A673 (cell line): ENCODE measurements at regions of chr3 and their contacts with region 1.

Region 1: GRCh38 chr3:43998836-43999727 is 242.6 kb upstream of the TOPAZ1 start:
- DNase-seq: peak; percentile 80
- H3K4me3 ChIP-seq: peak overlapping the region; percentile 63
- H3K27ac ChIP-seq: no peak overlapping the region
- H3K4me1 ChIP-seq: no peaks in the 10 kb centered on the region
- H3K27me3 ChIP-seq: peaks cover 5% of the 10 kb centered on the region
- CTCF ChIP-seq: no peak

Region 2: DNA sequence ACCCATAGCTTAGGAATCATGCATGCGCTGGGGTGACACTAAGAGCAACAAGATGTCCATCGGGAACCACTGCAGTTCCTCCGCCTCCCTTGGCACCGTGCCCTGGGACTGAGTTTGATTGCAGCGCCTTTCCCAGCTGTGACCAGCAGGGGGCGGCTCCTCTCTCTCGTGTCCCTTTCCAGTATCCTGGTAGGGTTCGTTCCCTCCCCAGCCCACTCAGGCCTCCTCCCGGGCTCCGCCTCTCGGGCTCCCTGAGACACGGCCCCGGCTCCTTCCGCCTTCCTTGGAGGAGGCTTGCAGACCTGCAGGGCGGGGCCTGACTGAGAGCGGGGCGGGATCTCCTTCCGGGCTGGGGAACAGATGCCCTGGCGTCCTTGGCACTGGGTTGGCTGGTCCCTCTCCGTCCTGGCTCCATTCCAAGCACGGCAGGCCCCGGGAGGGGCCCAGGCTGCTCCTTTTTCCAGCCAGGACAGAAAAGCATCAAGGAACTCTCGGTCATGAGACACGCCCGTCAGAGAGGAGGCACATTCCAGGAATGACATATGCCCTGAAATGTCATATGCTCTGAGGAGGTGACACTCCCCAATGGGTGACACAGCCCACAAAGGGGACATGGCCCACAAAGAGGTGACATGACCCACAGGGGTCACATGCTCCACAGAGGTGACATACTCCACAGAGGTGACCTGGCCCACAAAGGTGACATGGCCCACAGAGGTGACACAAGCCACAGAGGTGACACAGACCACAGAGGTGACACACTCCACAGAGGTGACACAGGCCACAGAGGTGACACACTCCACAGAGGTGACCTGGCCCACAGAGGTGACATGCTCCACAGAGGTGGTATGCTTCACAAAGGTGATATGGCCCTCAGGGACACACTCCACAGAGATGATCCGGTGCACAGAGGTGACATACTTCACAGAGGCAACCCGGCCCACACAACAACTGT is 229.3 kb before region 1 on chr3:
- CTCF ChIA-PET with region 1: interaction called, 4 read pairs
- POLR2A ChIA-PET with region 1: no interaction called
- intact Hi-C with region 1: loop called (anchors 10 kb)
- DNase-seq: peak; percentile 96
- H3K4me3 ChIP-seq: peak overlapping the region; percentile 17
- H3K27ac ChIP-seq: no peak overlapping the region
- H3K4me1 ChIP-seq: peaks cover 6% of the 10 kb centered on the region
- H3K27me3 ChIP-seq: no peaks in the 10 kb centered on the region
- CTCF ChIP-seq: peak; percentile 75

Region 3: GRCh38 chr3:43894176-43895049 is 104.7 kb before region 1 on chr3:
- CTCF ChIA-PET with region 1: no interaction called
- POLR2A ChIA-PET with region 1: interaction called, 4 read pairs
- intact Hi-C with region 1: loop called (anchors 5 kb)
- DNase-seq: peak; percentile 84
- H3K4me3 ChIP-seq: peak overlapping the region; percentile 33
- H3K27ac ChIP-seq: no peak overlapping the region
- H3K4me1 ChIP-seq: peaks cover 12% of the 10 kb centered on the region
- H3K27me3 ChIP-seq: no peaks in the 10 kb centered on the region
- CTCF ChIP-seq: 0 out of 2 replicates have a peak, but pooled peaks have one; percentile 21